B cell (primary cell): ENCODE measurements at regions of chr5 and their contacts with region 1.

Region 1: GRCh38 chr5:81506900-81507588 is 113.1 kb upstream of the ACOT12 start:
- DNase-seq: peak; percentile 79
- ATAC-seq: peak; percentile 100
- H3K4me3 ChIP-seq: no peak overlapping the region
- H3K4me3 Mint-ChIP-seq: no peak overlapping the region
- H3K27ac ChIP-seq: no peak overlapping the region
- H3K27ac Mint-ChIP-seq: no peak overlapping the region
- H3K4me1 ChIP-seq: no peaks in the 10 kb centered on the region
- H3K4me1 Mint-ChIP-seq: peaks cover 4% of the 10 kb centered on the region
- H3K27me3 ChIP-seq: no peaks in the 10 kb centered on the region
- H3K27me3 Mint-ChIP-seq: no peaks in the 10 kb centered on the region
- CTCF ChIP-seq: peak; percentile 80

Region 2: GRCh38 chr5:81207009-81207408 is 300.0 kb before region 1 on chr5:
- CTCF ChIA-PET with region 1: no interaction called
- POLR2A ChIA-PET with region 1: no interaction called
- intact Hi-C with region 1: no loop called
- DNase-seq: no peak
- ATAC-seq: no peak
- H3K4me3 ChIP-seq: no peak overlapping the region
- H3K4me3 Mint-ChIP-seq: no peak overlapping the region
- H3K27ac ChIP-seq: no peak overlapping the region
- H3K27ac Mint-ChIP-seq: no peak overlapping the region
- H3K4me1 ChIP-seq: no peaks in the 10 kb centered on the region
- H3K4me1 Mint-ChIP-seq: peaks cover 1% of the 10 kb centered on the region
- H3K27me3 ChIP-seq: no peaks in the 10 kb centered on the region
- H3K27me3 Mint-ChIP-seq: peaks cover 5% of the 10 kb centered on the region
- CTCF ChIP-seq: no peak

Region 3: GRCh38 chr5:81247441-81247972 is 259.5 kb before region 1 on chr5:
- CTCF ChIA-PET with region 1: no interaction called
- POLR2A ChIA-PET with region 1: no interaction called
- intact Hi-C with region 1: no loop called
- DNase-seq: no peak
- ATAC-seq: no peak
- H3K4me3 ChIP-seq: no peak overlapping the region
- H3K4me3 Mint-ChIP-seq: no peak overlapping the region
- H3K27ac ChIP-seq: no peak overlapping the region
- H3K27ac Mint-ChIP-seq: no peak overlapping the region
- H3K4me1 ChIP-seq: no peaks in the 10 kb centered on the region
- H3K4me1 Mint-ChIP-seq: no peaks in the 10 kb centered on the region
- H3K27me3 ChIP-seq: no peaks in the 10 kb centered on the region
- H3K27me3 Mint-ChIP-seq: no peaks in the 10 kb centered on the region
- CTCF ChIP-seq: no peak

Region 4: DNA sequence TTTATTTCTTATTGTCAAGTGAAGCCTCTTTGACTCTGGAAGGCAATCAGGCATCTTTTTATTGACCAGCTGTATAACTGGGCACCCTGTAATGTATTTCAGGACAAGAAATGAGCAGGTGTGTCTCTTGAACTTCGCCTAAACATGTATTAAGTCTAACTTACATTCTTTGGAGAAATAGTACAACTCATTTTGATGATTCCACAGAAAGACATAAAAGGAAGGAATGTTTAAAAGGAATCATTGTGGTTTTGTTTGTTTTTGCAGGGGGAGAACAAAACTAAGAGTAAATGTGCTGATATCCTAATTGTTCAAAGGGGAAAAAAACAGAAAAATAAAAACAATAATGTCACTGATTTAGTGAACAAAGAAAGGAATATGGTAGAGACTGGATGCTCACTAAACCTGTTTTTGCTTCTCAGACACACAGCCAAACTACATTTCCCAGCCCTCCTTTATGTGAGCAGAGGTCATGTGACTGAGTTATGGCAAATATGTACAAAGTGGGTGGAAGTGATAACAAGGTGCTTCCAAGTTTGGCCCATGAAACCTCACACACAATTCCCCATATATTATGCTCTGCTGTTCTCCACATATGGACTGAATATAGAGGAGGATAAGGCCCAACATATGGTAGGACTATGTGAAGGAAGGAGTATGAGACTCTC is 37.4 kb after region 1 on chr5:
- CTCF ChIA-PET with region 1: no interaction called
- POLR2A ChIA-PET with region 1: no interaction called
- intact Hi-C with region 1: no loop called
- DNase-seq: no peak
- ATAC-seq: no peak
- H3K4me3 ChIP-seq: no peak overlapping the region
- H3K4me3 Mint-ChIP-seq: no peak overlapping the region
- H3K27ac ChIP-seq: no peak overlapping the region
- H3K27ac Mint-ChIP-seq: no peak overlapping the region
- H3K4me1 ChIP-seq: no peaks in the 10 kb centered on the region
- H3K4me1 Mint-ChIP-seq: peaks cover 4% of the 10 kb centered on the region
- H3K27me3 ChIP-seq: no peaks in the 10 kb centered on the region
- H3K27me3 Mint-ChIP-seq: no peaks in the 10 kb centered on the region
- CTCF ChIP-seq: no peak

Region 5: GRCh38 chr5:81838307-81838906 is 331.4 kb after region 1 on chr5:
- CTCF ChIA-PET with region 1: interaction called, 13 read pairs
- POLR2A ChIA-PET with region 1: no interaction called
- intact Hi-C with region 1: loop called (anchors 1 kb)
- DNase-seq: peak; percentile 51
- ATAC-seq: peak; percentile 66
- H3K4me3 ChIP-seq: no peak overlapping the region
- H3K4me3 Mint-ChIP-seq: no peak overlapping the region
- H3K27ac ChIP-seq: no peak overlapping the region
- H3K27ac Mint-ChIP-seq: no peak overlapping the region
- H3K4me1 ChIP-seq: no peaks in the 10 kb centered on the region
- H3K4me1 Mint-ChIP-seq: no peaks in the 10 kb centered on the region
- H3K27me3 ChIP-seq: no peaks in the 10 kb centered on the region
- H3K27me3 Mint-ChIP-seq: no peaks in the 10 kb centered on the region
- CTCF ChIP-seq: peak; percentile 41

Region 6: GRCh38 chr5:82165740-82166530 is 658.9 kb after region 1 on chr5:
- CTCF ChIA-PET with region 1: interaction called, 35 read pairs
- POLR2A ChIA-PET with region 1: no interaction called
- intact Hi-C with region 1: loop called (anchors 1 kb)
- DNase-seq: peak; percentile 58
- ATAC-seq: peak; percentile 86
- H3K4me3 ChIP-seq: no peak overlapping the region
- H3K4me3 Mint-ChIP-seq: no peak overlapping the region
- H3K27ac ChIP-seq: no peak overlapping the region
- H3K27ac Mint-ChIP-seq: no peak overlapping the region
- H3K4me1 ChIP-seq: no peaks in the 10 kb centered on the region
- H3K4me1 Mint-ChIP-seq: peaks cover 3% of the 10 kb centered on the region
- H3K27me3 ChIP-seq: no peaks in the 10 kb centered on the region
- H3K27me3 Mint-ChIP-seq: no peaks in the 10 kb centered on the region
- CTCF ChIP-seq: peak; percentile 63

Region 7: GRCh38 chr5:82225525-82226172 is 718.6 kb after region 1 on chr5:
- CTCF ChIA-PET with region 1: interaction called, 41 read pairs
- POLR2A ChIA-PET with region 1: no interaction called
- intact Hi-C with region 1: loop called (anchors 1 kb)
- DNase-seq: peak; percentile 77
- ATAC-seq: peak; percentile 73
- H3K4me3 ChIP-seq: no peak overlapping the region
- H3K4me3 Mint-ChIP-seq: no peak overlapping the region
- H3K27ac ChIP-seq: no peak overlapping the region
- H3K27ac Mint-ChIP-seq: no peak overlapping the region
- H3K4me1 ChIP-seq: peaks cover 2 to 4% of the 10 kb centered on the region in 2 donors
- H3K4me1 Mint-ChIP-seq: peaks cover 4% of the 10 kb centered on the region
- H3K27me3 ChIP-seq: no peaks in the 10 kb centered on the region
- H3K27me3 Mint-ChIP-seq: no peaks in the 10 kb centered on the region
- CTCF ChIP-seq: peak; percentile 96